CD4-positive, alpha-beta memory T cell (primary cell): ENCODE measurements at regions of chr16 and their contacts with region 1.

Region 1: GRCh38 chr16:68064791-68065365 is 20.3 kb upstream of the NFATC3 start:
- DNase-seq: peak; percentile 60 to 78 (median 68)
- H3K4me3 ChIP-seq: no peak overlapping the region
- H3K4me3 Mint-ChIP-seq: peak overlapping the region in 6 of 8 donors; percentile 1 to 74 (median 34)
- H3K27ac ChIP-seq: peak overlapping the region; percentile 42
- H3K27ac Mint-ChIP-seq: peak overlapping the region; percentile 79 to 96 (median 84)
- H3K4me1 ChIP-seq: peaks cover 79% of the 10 kb centered on the region
- H3K4me1 Mint-ChIP-seq: peaks cover 51 to 90% (median 71%) of the 10 kb centered on the region in 4 donors
- H3K27me3 ChIP-seq: no peaks in the 10 kb centered on the region
- H3K27me3 Mint-ChIP-seq: no peaks in the 10 kb centered on the region

Region 2: GRCh38 chr16:68074850-68075555 is 10.1 kb after region 1 on chr16:
- CTCF ChIA-PET with region 1: interaction called, 59 read pairs
- POLR2A ChIA-PET with region 1: interaction called, 474 read pairs
- intact Hi-C with region 1: loop called (anchors 2 kb)
- DNase-seq: peak; percentile 63 to 82 (median 71)
- H3K4me3 ChIP-seq: peak overlapping the region in 1 of 2 donors; percentile 1
- H3K4me3 Mint-ChIP-seq: peak overlapping the region; percentile 26 to 89 (median 84)
- H3K27ac ChIP-seq: peak overlapping the region; percentile 40
- H3K27ac Mint-ChIP-seq: peak overlapping the region; percentile 66 to 95 (median 91)
- H3K4me1 ChIP-seq: peaks cover 94% of the 10 kb centered on the region
- H3K4me1 Mint-ChIP-seq: peaks cover 70 to 92% (median 84%) of the 10 kb centered on the region in 4 donors
- H3K27me3 ChIP-seq: no peaks in the 10 kb centered on the region
- H3K27me3 Mint-ChIP-seq: no peaks in the 10 kb centered on the region

Region 3: DNA sequence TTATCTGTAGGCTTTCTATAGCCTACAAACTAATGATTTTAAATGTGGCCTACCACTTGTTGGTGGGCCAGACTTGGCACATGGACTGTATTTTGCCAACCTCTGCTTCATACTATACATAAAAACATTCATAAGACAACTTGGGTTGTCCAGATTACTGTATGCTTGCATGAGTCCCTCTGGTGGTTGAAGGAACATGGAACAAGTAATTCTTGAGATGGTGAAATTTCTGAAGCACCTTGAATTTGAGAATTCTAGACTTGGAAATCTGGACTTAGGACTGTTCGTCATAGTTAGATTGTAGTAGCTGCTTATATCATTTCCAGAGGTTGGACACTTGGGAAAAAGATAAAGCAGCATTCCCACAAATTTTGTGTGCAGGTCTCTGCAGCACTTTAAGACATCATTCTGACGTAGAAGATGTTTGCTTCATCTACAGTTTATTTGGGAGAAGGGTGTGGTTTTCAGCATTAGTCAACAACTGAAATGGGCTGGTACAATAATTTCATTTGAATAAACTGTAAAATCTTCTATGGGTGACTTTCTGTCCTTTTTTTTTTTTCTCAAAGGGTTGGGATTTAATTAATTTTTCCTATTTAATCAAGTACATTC is 51.5 kb after region 1 on chr16:
- CTCF ChIA-PET with region 1: no interaction called
- POLR2A ChIA-PET with region 1: interaction called, 4 read pairs
- intact Hi-C with region 1: loop called (anchors 10 kb)
- DNase-seq: peak in 4 of 5 donors; percentile 30 to 41 (median 33)
- H3K4me3 ChIP-seq: no peak overlapping the region
- H3K4me3 Mint-ChIP-seq: peak overlapping the region in 4 of 8 donors; percentile 30 to 78 (median 50)
- H3K27ac ChIP-seq: no peak overlapping the region
- H3K27ac Mint-ChIP-seq: peak overlapping the region in 2 of 7 donors; percentile 62
- H3K4me1 ChIP-seq: peaks cover 95% of the 10 kb centered on the region
- H3K4me1 Mint-ChIP-seq: peaks cover 52 to 96% (median 79%) of the 10 kb centered on the region in 4 donors
- H3K27me3 ChIP-seq: no peaks in the 10 kb centered on the region
- H3K27me3 Mint-ChIP-seq: no peaks in the 10 kb centered on the region

Region 4: DNA sequence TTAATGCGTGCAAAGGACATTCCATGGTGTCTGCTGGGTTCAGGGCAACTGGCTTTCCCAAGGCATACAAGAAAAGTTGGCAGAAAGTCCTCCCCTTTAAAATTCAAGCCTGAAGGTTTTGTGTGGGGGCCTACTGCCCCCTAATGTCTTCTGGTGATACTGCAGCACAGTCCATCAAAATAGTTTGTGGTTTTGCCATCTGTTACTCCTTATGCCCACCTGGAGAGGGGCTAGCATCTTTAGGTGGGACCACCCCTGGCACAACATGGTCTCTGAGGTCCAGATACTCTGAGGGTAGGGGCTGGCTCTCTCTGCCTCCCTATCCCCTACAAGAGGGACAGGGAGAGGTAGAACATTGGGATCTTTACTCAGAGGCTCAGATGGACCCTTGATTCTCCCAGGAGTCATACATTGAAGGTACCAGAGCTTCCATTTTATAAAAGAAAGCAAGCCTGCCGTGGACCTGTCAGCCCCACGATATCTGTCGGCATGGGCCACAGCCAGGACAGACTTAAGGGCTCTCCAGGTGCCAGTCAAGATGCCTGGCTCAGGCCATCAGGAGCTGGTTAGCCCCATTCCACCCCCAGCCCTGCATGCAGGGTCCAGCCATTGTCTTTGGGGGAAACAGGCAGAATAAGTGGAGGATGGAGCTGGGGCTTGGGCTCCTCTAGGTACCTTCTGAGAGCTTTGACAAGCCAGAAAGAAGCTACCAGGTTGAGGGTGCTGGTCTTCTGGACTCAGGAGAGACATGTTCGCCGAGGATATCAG is 164.7 kb after region 1 on chr16:
- CTCF ChIA-PET with region 1: interaction called, 4 read pairs
- POLR2A ChIA-PET with region 1: interaction called, 4 read pairs
- intact Hi-C with region 1: loop called (anchors 1 kb)
- DNase-seq: peak in 4 of 5 donors; percentile 44 to 55 (median 52)
- H3K4me3 ChIP-seq: no peak overlapping the region
- H3K4me3 Mint-ChIP-seq: peak overlapping the region in 1 of 8 donors; percentile 31
- H3K27ac ChIP-seq: no peak overlapping the region
- H3K27ac Mint-ChIP-seq: peak overlapping the region in 6 of 7 donors; percentile 10 to 89 (median 51)
- H3K4me1 ChIP-seq: peaks cover 23% of the 10 kb centered on the region
- H3K4me1 Mint-ChIP-seq: peaks cover 21 to 51% (median 34%) of the 10 kb centered on the region in 4 donors
- H3K27me3 ChIP-seq: no peaks in the 10 kb centered on the region
- H3K27me3 Mint-ChIP-seq: no peaks in the 10 kb centered on the region